ENCODE measurements at regions of chr5 and their contacts with region 1.

Region 1: DNA sequence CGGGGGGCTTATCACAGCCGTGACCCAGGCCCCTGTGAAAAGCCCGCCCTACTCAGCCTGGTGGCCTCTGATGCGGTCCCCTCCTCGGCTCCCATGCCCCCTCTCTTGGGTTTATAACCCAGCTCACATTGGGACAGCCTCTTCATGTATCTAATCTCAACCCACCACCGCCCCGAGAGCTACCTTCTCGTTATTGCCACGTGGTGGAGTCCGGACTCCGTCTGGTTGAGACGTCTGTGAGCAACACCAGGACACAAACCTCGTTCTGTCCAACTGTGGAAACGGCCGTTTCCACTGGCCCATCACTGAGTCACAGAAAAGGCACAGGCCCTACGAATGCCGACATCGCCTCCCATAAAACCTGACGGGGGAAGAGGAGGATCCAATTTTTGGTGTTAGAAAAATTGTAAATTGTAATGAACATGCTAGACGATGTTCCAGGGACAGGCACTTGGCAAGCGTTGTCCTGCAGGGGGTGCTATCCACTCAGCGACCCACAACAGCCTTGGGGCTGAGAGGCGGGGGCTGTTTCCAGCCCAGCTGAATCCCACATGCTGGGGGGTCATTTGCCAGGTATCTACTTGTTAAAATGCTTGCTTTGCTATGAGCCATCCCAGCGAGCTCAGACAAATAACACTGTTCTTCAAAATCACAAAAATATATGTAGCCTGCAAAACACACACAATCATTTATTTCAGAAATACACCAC is 37.3 kb upstream of the N4BP3 start:
- DNase-seq: peak; percentile 88
- H3K27ac ChIP-seq: no peak overlapping the region
- CTCF ChIP-seq: peak; percentile 97

Region 2: GRCh38 chr5:178106556-178107250 is 30.7 kb after region 1 on chr5:
- CTCF ChIA-PET with region 1: interaction called, 49 read pairs
- POLR2A ChIA-PET with region 1: no interaction called
- DNase-seq: peak; percentile 76
- H3K27ac ChIP-seq: peak overlapping the region; percentile 39
- CTCF ChIP-seq: no peak

Region 3: DNA sequence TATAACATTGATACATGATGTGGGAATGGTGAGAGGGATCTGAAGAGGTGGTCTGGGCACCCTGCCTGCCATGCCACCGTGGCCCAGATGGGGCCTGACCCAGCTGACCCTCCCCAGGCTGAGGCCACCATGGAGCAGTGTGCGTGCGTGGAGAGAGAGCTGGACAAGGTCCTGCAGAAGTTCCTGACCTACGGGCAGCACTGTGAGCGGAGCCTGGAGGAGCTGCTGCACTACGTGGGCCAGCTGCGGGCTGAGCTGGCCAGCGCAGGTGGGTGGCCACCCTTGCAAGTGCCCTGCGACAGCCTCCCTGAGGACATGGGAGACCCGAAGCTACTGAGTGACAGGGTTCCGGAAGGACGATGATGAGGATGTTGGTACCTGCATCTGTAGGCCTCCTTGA is 62.0 kb after region 1 on chr5:
- CTCF ChIA-PET with region 1: interaction called, 175 read pairs
- POLR2A ChIA-PET with region 1: no interaction called
- DNase-seq: no peak
- H3K27ac ChIP-seq: no peak overlapping the region
- CTCF ChIP-seq: no peak

Region 4: GRCh38 chr5:178153573-178154343 is 77.8 kb after region 1 on chr5 and contains the start of gene NHP2:
- CTCF ChIA-PET with region 1: interaction called, 175 read pairs
- POLR2A ChIA-PET with region 1: no interaction called
- DNase-seq: peak; percentile 100
- H3K27ac ChIP-seq: peak within 1 kb of the TSS; percentile 70
- CTCF ChIP-seq: no peak

Region 5: DNA sequence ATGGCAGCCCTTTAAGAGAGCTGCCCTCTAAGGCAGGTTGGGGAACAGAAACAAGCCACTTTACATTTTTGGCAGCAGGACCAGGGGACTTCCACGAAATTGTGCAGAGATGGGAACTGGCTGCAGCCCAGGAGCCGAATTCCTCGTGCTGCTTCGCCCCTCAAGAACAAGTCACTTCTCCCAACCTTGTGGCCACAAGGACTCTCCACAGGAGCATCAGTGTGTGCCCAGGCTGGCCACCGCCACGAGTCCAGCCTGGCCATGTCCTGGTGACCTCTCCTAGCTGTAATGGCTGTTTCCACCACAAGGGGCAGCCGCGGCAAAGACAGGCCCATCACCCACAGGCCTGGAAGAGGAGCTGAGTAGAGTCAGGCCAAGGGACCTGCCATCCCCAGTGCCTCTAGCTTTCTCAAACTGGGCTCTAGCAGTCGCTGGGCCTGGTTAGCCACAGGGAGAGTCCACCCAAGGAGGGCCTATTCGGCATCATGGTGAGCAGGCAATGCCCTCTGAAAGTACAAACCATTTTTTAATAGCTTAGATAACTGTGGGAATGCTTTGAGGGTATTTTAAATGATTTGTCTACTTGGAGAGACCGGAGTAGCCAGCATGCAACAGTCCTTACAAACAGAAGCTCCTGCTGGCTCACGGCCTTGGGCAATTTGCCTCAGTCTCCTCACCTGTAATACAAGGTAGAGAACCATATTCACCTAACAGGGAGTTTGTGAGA is 385.2 kb after region 1 on chr5:
- CTCF ChIA-PET with region 1: no interaction called
- POLR2A ChIA-PET with region 1: no interaction called
- DNase-seq: peak; percentile 79
- H3K27ac ChIP-seq: no peak overlapping the region
- CTCF ChIP-seq: peak; percentile 80